ENCODE measurements at regions of chr5 and their contacts with region 1.

Region 1: DNA sequence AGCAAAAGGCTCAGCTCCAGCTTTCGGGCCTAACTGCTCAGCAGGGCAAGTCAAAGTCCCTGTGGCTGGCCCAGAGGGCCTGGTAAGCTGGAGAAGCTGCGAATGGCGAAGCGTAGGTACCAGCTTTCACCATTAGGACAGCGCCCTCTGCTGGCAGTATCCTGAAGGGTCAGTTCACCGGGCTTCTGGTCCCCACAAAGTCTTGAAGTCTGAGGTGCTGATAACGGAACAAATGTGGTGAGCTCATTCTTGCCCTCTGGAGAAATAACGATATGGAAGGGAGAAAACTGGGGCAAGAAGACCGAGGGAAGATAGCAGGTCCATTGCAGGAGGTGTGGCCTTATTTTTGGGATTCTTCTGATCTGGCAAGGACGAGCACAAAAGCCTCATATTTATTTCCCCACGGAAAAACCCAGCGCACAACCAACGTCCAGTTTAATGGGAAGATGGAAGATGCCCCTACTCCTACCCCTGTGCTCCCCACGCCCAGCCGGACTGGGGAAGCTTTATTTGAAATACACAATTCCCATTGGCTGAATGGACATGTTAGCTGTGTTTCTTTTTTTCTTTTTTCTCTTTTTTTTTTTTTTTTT is 7.2 kb downstream of the SOWAHA start:
- DNase-seq: peak; percentile 97
- H3K4me3 ChIP-seq: no peak overlapping the region
- H3K27ac ChIP-seq: no peak overlapping the region
- H3K4me1 ChIP-seq: no peaks in the 10 kb centered on the region
- H3K27me3 ChIP-seq: no peaks in the 10 kb centered on the region
- CTCF ChIP-seq: peak; percentile 89

Region 2: DNA sequence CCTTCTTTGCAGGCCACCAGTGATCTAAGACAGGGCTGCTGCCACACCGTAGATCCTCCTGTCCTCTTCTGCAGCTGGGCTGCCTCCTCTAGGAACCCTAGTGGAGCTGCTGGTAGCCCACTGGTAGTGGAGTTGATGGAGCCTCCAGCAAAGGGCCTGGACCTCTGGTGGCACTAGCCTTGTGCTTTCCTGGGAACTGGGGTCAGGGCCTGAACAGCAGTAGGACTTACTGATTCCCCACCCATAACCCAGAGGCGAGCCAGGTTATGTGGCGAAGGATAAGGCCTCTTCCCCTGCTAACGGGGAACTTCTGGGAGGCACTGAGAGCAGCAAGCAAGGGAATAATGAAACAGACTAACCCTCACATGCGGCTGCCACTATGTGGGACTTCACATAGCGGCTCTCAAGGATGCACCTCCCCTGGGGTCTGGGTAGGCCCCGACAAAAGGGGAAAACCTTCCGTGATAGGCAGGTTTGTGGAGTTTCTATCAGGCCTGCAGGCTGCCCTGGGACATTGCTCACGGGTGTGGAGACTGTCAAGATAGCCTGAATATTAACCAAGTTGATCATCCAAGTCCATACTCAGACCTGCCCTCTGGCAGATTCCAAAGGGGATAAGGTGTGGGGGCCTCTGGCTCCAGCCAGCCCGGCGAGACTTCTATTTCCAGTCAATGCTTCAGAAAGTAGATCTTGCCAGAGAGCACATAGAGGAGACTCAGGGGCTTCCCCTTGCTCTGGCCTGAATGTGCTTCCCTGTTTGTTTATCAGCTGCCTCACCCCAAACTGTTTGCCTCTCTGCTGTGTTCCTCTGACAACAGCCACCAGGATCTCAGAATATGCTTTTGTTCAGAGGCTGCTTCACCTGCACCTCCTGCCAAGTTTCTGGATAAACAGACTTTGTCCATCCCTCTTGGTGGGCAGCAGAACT is 518.6 kb before region 1 on chr5:
- intact Hi-C with region 1: no loop called
- DNase-seq: no peak
- H3K4me3 ChIP-seq: no peak overlapping the region
- H3K27ac ChIP-seq: peak overlapping the region; percentile 18
- H3K4me1 ChIP-seq: peaks cover 3% of the 10 kb centered on the region
- H3K27me3 ChIP-seq: no peaks in the 10 kb centered on the region
- CTCF ChIP-seq: no peak

Region 3: DNA sequence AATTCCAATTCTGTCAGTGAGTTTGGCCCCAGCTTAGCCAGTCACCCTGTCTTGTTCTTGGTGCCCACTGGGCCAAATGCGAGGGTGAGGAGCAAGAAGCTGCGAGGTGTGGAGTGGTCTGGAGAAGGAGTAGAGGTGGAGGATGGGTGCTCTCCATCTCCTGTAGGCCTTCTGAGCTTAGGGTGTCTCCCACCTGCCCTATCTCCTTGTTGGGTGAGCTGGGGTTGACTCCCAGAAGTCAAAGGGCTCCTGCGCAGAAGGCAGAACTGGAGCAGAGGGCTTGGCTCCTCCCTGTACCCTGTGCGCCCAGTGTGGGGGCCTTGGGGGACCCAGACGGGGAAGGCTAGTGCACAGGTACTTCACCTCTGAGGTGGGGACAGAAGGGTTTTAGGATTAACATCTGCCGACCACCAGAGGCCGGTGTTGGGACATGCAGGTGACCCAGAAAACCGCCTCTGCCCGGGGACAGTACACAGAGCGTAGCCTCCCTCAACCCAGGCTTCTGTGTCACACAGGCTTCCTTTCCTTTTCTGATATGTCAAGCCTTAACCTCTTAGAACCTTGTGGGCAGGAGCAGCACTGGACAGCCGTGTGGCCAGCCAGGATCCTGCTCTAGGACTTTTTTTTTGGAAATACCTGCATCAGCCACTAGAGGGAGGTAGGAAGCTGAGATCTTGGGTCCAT is 293.8 kb before region 1 on chr5:
- intact Hi-C with region 1: loop called (anchors 10 kb)
- DNase-seq: peak; percentile 43
- H3K4me3 ChIP-seq: no peak overlapping the region
- H3K27ac ChIP-seq: no peak overlapping the region
- H3K4me1 ChIP-seq: no peaks in the 10 kb centered on the region
- H3K27me3 ChIP-seq: no peaks in the 10 kb centered on the region
- CTCF ChIP-seq: peak; percentile 82

Region 4: DNA sequence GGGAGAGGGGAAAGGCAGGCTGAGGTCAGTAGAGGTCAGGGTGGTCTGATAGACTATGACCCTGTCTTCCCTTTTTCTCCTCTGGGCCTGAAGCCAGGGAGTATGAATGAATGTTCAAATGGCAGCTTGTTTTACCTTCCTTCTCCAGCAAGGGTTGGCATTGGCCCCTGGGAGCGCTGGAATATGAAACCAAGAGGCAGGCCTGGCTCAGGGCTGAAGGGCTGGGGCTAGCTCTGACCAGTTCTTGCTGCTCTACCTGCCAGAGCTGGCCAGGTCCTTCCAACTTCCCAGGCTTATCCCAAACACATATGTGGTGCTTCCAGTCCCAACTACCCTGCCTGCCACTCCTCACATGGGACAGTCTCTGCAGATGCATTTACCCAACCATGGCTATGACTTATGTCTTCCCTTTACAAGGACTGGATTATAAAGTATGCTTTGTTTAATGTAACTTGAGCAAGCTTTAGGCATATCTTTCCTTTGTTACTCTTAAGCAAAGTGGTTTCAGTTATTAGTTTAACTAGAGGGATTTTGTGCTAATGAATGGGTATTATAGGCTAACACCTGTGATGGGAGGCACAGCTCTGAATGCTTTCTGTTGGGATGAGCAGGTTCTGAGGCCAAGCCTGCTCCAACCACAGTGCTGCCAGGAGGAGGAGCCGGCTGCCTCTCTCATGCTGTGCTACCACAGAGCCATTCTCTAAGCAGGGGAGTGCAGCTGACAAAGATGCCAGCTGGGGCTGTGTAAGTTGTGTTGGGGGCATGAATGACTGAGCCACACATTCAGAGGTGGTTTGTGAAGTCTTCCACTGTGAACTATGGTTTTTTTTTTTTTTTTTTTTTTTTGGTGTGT is 66.9 kb before region 1 on chr5:
- intact Hi-C with region 1: loop called (anchors 5 kb)
- DNase-seq: no peak
- H3K4me3 ChIP-seq: no peak overlapping the region
- H3K27ac ChIP-seq: no peak overlapping the region
- H3K4me1 ChIP-seq: no peaks in the 10 kb centered on the region
- H3K27me3 ChIP-seq: no peaks in the 10 kb centered on the region
- CTCF ChIP-seq: no peak

Region 5: GRCh38 chr5:133273661-133274596 is 453.7 kb after region 1 on chr5:
- intact Hi-C with region 1: no loop called
- DNase-seq: no peak
- H3K4me3 ChIP-seq: no peak overlapping the region
- H3K27ac ChIP-seq: no peak overlapping the region
- H3K4me1 ChIP-seq: no peaks in the 10 kb centered on the region
- H3K27me3 ChIP-seq: no peaks in the 10 kb centered on the region
- CTCF ChIP-seq: no peak

Measured in colonic mucosa (tissue), 4 donors.